ENCODE measurements at regions of chr1 and their contacts with region 1.

Region 1: DNA sequence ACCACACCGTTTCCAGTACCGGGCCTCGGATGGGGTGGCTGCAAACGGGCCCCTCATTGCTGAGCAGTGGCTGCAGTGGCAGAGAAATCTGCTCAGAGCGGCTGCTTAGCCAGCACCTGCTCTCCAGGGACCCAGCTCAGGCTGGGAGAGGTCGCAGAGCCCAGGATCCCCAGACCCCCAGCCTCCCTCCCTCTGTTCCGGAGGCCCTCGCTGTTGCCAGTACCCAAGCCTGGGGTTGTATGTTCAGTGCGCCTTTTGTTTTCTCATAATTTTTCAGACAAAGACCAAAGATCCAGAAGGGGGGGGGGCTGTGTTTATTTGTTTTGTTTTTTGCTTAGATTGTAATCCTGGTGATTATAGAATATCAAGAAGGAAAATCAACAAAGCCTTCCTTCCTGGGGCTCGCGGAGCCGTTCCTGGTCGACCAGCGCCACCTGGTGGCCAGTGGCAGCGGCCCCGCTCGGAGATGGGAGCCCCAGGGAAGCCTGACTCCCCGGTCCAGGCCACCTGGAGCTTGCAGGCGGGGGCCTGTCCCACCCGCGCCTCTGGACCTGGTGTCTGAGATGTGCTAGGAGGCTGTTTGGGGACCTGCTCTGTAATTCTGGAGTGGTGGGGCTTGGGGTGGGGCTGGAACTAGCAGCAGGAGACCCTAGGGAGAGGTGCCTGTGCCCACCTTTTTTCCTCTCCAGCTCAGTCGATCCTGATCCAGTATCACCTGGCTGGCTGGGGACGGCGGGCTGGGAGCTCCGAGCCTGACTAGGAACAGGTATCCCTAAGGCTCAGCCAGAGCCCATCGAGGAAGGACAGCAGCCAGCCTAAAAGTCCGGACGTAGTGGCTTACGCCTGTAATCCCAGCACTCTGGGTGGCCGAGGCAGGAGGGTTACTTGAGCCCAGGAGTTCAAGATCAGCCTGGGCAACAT is 123.9 kb upstream of the VAMP3 start:
- DNase-seq: peak; percentile 16 to 75 (median 46)
- ATAC-seq: peak; percentile 56
- H3K4me3 ChIP-seq: no peak overlapping the region
- H3K4me3 Mint-ChIP-seq: no peak overlapping the region
- H3K27ac ChIP-seq: no peak overlapping the region
- H3K27ac Mint-ChIP-seq: no peak overlapping the region
- H3K4me1 ChIP-seq: no peaks in the 10 kb centered on the region
- H3K4me1 Mint-ChIP-seq: peaks cover 0 to 6% (median 0%) of the 10 kb centered on the region in 7 donors
- H3K27me3 ChIP-seq: no peaks in the 10 kb centered on the region
- H3K27me3 Mint-ChIP-seq: peaks cover 0 to 3% (median 0%) of the 10 kb centered on the region in 5 donors

Region 2: DNA sequence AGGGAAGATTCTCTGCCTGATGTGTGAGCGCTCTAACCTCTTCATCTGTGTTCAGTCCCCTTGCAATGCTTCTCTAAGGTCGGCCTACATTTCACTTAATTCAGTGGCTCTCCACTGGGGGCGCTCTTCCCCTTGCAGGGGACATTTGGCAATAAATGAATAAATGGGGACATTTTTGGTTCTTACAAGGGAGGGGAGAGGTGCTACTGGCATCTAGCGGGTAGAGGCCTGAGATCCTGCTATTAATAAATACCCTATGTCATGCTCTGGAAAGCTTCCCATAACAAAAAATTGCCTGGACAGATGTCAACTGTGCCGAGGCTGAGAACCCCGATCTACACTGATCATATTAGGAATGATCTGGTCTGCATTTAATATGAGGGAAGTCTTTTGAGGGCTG is 919.7 kb before region 1 on chr1:
- CTCF ChIA-PET with region 1: no interaction called
- POLR2A ChIA-PET with region 1: no interaction called
- intact Hi-C with region 1: loop called in 1 of 2 experiments (anchors 10 kb)
- DNase-seq: peak in 7 of 9 donors; percentile 36 to 60 (median 51)
- ATAC-seq: peak; percentile 74
- H3K4me3 ChIP-seq: no peak overlapping the region
- H3K4me3 Mint-ChIP-seq: no peak overlapping the region
- H3K27ac ChIP-seq: no peak overlapping the region
- H3K27ac Mint-ChIP-seq: peak overlapping the region in 1 of 9 donors; percentile 25
- H3K4me1 ChIP-seq: no peaks in the 10 kb centered on the region
- H3K4me1 Mint-ChIP-seq: no peaks in the 10 kb centered on the region
- H3K27me3 ChIP-seq: no peaks in the 10 kb centered on the region
- H3K27me3 Mint-ChIP-seq: peaks cover 6 to 10% (median 6%) of the 10 kb centered on the region in 5 donors

Region 3: DNA sequence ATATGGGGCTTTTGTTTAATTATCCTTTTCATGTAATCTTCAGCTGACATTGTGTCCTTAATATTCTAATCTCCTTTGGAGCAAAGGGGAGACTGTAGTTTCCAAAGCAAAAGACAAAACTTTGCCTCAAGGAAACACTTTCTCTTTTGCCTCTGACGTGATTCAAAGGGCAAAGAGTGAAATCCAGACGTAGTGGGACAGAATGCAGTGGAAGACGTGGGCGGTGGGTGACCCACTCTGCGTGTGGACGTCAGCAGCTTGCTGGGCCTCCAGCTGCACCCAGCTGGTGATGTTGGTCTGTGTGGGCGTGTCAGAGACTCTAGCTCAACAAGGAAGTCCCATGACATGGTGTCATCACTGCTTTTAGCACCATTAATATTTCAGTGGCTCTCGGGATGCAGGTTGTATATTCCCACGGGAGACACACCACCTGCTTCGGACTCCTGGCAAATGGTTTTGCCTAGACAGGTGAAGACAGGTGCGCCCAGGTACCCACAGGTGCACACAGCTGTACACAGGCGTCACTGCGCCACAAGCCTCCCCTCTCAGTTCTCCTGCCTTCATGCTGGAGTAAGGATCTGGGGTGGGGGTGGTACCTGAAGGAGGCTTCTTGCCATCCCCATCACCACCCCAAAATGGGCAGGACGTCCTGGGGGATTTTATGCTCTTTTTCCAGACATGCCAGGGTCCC is 168.3 kb before region 1 on chr1:
- CTCF ChIA-PET with region 1: no interaction called
- POLR2A ChIA-PET with region 1: no interaction called
- intact Hi-C with region 1: no loop called
- DNase-seq: no peak
- ATAC-seq: no peak
- H3K4me3 ChIP-seq: no peak overlapping the region
- H3K4me3 Mint-ChIP-seq: no peak overlapping the region
- H3K27ac ChIP-seq: no peak overlapping the region
- H3K27ac Mint-ChIP-seq: no peak overlapping the region
- H3K4me1 ChIP-seq: no peaks in the 10 kb centered on the region
- H3K4me1 Mint-ChIP-seq: peaks cover 0 to 1% (median 0%) of the 10 kb centered on the region in 7 donors
- H3K27me3 ChIP-seq: no peaks in the 10 kb centered on the region
- H3K27me3 Mint-ChIP-seq: peaks cover 0 to 4% (median 0%) of the 10 kb centered on the region in 5 donors

Measured in naive thymus-derived CD4-positive, alpha-beta T cell (primary cell).